Caki2 (cell line): ENCODE measurements at regions of chr15 and their contacts with region 1.

Region 1: GRCh38 chr15:99059010-99059981 is 45.6 kb upstream of the SYNM start:
- DNase-seq: peak; percentile 82

Region 2: GRCh38 chr15:98954411-98954810 is 104.9 kb before region 1 on chr15:
- in situ Hi-C with region 1: loop called (anchors 10 kb)
- DNase-seq: peak; percentile 84

Region 3: GRCh38 chr15:99174567-99175395 is 115.5 kb after region 1 on chr15:
- in situ Hi-C with region 1: no loop called
- DNase-seq: no peak